OCI-LY7 (cell line): ENCODE measurements at regions of chr4 and their contacts with region 1.

Region 1: GRCh38 chr4:183878251-183878970 is 26.7 kb upstream of the STOX2 start:
- DNase-seq: no peak
- H3K4me3 ChIP-seq: no peak overlapping the region
- H3K27ac ChIP-seq: no peak overlapping the region
- H3K4me1 ChIP-seq: no peaks in the 10 kb centered on the region
- CTCF ChIP-seq: no peak

Region 2: DNA sequence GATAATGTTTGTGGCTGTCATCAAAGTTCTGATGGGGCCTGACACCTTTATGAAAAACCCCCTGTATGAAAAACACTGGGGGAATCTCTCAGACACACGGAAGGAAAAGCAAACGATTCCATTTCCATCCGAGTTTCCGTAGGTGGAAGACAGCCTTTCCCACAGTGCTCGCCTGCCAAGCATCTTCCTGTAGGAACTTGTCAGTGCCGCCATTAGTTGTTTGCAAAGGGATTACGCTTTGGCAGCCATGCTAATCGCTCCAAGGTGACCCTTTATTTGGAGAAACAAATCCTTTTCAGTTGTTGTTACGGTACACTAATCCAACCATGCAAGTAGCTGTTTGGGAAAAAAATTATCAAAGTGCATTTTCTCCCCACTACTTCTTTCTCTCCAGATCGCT is 17.7 kb before region 1 on chr4:
- CTCF ChIA-PET with region 1: no interaction called
- POLR2A ChIA-PET with region 1: interaction called, 3 read pairs
- intact Hi-C with region 1: loop called (anchors 2 kb)
- DNase-seq: no peak
- H3K4me3 ChIP-seq: no peak overlapping the region
- H3K27ac ChIP-seq: no peak overlapping the region
- H3K4me1 ChIP-seq: no peaks in the 10 kb centered on the region
- CTCF ChIP-seq: no peak

Region 3: GRCh38 chr4:184680698-184681097 is 802.3 kb after region 1 on chr4:
- CTCF ChIA-PET with region 1: no interaction called
- POLR2A ChIA-PET with region 1: no interaction called
- intact Hi-C with region 1: no loop called
- DNase-seq: no peak
- H3K4me3 ChIP-seq: no peak overlapping the region
- H3K27ac ChIP-seq: no peak overlapping the region
- H3K4me1 ChIP-seq: no peaks in the 10 kb centered on the region
- CTCF ChIP-seq: no peak

Region 4: GRCh38 chr4:184805462-184806228 is 927.2 kb after region 1 on chr4:
- CTCF ChIA-PET with region 1: no interaction called
- POLR2A ChIA-PET with region 1: no interaction called
- intact Hi-C with region 1: no loop called
- DNase-seq: no peak
- H3K4me3 ChIP-seq: no peak overlapping the region
- H3K27ac ChIP-seq: no peak overlapping the region
- H3K4me1 ChIP-seq: peaks cover 15% of the 10 kb centered on the region
- CTCF ChIP-seq: no peak